ENCODE measurements at regions of chr19 and their contacts with region 1.

Region 1: DNA sequence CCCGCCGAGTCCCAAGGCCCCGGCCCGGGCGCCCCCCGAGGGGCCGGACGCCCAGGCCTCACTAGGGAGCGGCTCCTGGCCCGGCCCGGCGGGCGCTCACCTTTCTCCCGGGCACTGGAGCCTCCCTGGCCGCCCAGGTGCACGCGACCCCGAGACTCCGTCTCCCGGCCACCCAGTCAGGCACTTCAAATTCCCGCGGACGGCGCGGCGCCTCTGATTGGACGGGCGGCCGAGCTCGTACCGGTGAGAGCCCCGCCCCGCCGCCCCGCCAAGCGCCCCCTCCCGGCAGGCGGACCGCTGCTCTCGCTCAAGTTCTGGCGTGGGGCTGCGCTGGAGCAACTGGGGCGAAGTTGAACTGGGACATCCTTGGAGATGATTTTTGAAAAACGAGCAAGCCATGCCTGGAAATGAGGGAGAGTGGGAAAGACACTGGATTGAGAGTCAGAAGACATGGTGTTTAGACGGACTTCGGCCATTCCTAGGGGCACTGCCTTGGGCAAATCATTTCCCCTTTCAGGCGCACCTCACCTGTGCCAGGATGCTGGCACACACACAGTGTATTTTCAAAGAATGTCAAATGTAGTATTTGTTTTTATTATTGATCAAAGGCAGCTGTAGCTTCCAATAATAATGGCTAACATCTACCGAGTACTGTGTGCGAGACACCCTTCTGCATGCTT is 485.3 kb downstream of the UQCRFS1 start:
- H3K4me3 ChIP-seq: peak overlapping the region; percentile 66
- H3K27ac ChIP-seq: peak overlapping the region; percentile 69; the same call in 1 of the 2 replicates
- H3K4me1 ChIP-seq: peaks cover 8% of the 10 kb centered on the region
- CTCF ChIP-seq: peak; percentile 97

Region 2: DNA sequence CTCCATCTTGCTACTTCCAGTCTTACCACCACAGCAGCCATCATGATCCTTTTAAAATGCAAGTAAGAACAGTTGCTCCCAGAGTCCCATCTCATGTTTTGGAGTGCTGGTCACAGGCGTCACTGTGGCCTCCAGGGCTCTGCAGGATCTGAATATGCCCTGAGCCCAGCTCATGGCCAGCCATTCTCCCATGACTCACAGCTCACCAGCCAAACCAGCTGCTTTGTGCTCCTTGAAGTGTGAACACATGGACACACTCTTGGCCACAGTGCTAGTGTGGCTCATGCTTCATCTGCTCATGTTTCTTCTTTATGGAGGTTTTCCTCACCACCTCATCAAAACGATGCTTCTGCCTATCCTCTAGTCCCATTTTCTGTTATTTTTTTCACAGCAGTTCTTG is 18.9 kb after region 1 on chr19:
- CTCF ChIA-PET with region 1: interaction called, 21 read pairs
- POLR2A ChIA-PET with region 1: no interaction called
- H3K4me3 ChIP-seq: no peak overlapping the region
- H3K27ac ChIP-seq: no peak overlapping the region
- H3K4me1 ChIP-seq: peaks cover 2% of the 10 kb centered on the region; the same call in 1 of the 2 replicates
- CTCF ChIP-seq: no peak

Region 3: DNA sequence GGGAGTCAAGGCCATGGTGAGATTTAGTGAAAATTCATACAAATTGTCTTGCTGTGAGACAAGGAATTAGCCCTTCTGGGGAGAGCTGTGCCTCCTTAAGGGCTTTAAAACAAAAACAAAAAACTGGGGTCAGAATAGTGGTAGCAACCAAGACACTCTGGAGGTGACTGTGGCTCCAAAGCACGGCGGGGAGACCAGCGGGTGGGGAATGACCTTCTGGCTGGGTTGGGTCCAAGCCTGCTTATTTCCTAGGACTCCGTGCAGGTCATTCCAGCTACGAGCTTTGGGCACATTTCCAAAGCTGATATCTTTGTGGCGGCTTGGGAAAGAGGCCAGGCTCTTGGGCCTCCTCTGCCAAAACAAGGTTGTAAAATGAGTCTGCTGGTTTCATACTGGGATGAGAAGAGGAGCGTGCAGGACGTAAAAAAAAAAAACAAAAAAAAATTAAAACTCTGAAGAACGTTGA is 137.0 kb after region 1 on chr19:
- CTCF ChIA-PET with region 1: interaction called, 18 read pairs
- POLR2A ChIA-PET with region 1: interaction called, 5 read pairs
- H3K4me3 ChIP-seq: no peak overlapping the region
- H3K27ac ChIP-seq: peak overlapping the region; percentile 95
- H3K4me1 ChIP-seq: peaks cover 46% of the 10 kb centered on the region
- CTCF ChIP-seq: no peak